ENCODE measurements at regions of chr3 and their contacts with region 1.

Region 1: DNA sequence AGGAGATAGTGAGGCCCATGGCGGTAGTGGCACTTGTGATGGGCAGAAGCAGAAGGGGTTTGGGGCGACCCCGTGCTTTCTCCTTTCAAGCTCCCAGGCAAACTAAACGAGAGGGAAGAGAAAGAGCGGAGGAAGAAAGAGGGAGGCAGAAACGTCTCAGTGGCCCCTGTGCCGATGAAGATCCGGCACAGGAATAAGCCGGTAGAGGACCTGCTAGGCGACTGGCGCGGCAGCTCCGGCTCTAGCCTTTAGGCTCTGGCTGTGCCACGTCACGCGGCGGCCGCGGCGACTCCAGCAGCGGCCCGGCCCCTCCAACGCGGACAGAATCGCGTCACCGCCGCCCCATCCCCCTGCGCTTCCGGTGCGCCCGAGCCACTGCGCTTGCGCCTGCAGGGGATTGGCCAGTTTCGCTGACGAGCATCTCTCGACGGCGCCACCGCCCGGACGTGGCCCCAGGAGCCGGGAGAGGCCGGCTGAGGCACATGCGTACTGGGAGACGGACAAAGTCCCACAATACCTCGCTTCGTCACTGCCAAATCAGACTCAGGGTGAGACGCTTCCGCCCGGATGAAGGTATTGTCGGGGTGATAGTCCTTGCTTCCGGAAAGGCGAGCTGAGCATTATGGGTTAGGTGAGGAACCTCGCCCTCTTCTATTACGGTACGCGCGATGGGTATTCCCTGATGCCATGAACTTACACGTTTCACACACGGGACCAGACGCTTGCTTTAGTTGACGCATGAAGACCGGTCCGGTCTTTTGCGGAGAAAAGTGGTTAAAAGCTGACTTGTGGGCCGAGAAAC is at the start of gene ARF4:
- DNase-seq: peak; percentile 100
- ATAC-seq: peak; percentile 89
- H3K4me3 Mint-ChIP-seq: peak within 1 kb of the TSS; percentile 95
- H3K27ac Mint-ChIP-seq: peak within 1 kb of the TSS; percentile 100
- H3K4me1 Mint-ChIP-seq: peaks cover 53% of the 10 kb centered on the region
- H3K27me3 Mint-ChIP-seq: no peaks in the 10 kb centered on the region
- CTCF ChIP-seq: no peak
- total RNA-seq, gene ARF4: 43.0 and 45.1 TPM in 2 replicates

Region 2: DNA sequence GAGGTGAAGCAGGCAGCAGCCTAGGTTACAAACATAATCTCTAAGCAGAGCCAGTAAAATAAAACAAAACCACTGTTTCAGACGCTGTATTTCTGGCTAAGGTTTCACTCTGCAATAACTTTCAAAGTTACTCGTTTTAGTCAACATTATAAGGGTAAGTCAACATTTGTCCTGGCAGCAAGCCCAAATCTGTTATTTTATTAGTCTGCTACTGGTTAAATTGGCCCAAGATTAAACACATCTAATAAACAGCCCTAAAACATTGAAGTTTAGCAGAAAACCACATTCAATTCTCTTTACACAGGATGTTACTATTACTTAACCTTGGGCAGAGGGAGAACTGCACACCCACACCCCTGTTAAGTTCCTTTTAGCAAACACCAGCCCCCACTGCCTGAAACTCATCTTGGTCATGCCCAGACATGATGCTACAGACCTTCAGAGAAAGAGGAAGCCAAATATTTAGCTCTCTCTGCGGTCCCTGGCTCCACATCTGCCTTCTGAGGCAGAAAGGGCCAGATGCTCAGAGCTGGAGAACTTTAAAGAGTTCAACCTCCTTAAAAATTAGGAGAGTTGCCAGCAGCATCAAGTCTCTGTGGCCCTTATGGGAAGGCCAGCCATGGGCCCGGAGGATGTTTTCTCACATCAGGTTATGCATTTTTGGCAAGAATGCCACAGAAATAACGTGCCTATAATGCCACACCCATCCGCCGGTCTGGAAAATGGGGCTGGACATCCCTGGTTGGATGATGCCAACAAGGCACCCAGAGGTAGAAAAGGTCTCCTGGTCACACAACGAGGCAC is 813.5 kb before region 1 on chr3:
- CTCF ChIA-PET with region 1: no interaction called
- POLR2A ChIA-PET with region 1: no interaction called
- intact Hi-C with region 1: loop called (anchors 5 kb)
- DNase-seq: peak; percentile 40
- ATAC-seq: peak; percentile 99
- H3K4me3 Mint-ChIP-seq: peak overlapping the region; percentile 32
- H3K27ac Mint-ChIP-seq: peak overlapping the region; percentile 92
- H3K4me1 Mint-ChIP-seq: peaks cover 88% of the 10 kb centered on the region
- H3K27me3 Mint-ChIP-seq: no peaks in the 10 kb centered on the region
- CTCF ChIP-seq: no peak

Region 3: DNA sequence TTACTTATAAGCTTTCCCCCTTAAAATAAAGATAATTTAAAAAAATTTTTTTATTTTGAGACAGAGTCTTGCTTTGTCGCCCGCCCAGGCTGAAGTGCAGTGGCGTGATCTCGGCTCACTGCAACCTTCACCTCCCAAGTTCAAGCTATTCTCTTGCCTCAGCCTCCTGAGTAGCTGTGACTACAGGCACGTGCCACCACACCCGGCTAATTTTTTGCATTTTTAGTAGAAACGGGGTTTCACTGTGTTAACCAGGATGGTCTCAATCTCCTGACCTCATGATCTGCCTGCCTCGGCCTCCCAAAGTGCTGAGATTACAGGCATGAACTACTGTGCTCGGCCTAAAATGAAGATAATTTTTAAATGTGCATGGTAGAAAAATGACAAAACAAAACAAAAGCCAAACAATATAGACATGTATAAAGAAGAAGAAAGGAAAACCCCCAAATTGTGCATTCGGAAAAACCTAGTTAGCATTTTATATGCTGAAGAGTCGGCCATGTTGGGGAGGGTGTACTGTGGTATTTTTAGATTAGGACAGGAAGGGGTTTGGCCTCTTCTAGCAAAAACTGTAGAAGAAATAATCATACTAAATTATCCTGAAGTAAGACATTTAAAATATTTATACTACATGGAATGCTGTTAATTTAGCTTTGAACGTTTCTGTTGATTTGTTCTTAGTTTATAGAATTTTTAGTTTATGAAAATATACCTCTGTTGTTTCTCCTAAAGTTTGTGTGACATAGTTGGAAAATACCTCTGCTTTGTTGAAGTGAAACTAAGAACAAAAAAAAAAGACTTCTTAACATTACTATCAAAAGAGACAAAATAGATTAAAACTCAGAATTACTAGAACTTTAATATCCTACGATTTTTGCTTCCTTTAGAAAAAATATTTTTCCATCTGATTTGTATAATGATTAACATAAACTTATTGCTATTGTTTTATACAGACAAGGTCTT is 362.4 kb before region 1 on chr3:
- CTCF ChIA-PET with region 1: no interaction called
- POLR2A ChIA-PET with region 1: interaction called, 3 read pairs
- intact Hi-C with region 1: loop called (anchors 2 kb)
- DNase-seq: no peak
- ATAC-seq: peak; percentile 80
- H3K4me3 Mint-ChIP-seq: peak overlapping the region; percentile 79
- H3K27ac Mint-ChIP-seq: peak overlapping the region; percentile 95
- H3K4me1 Mint-ChIP-seq: peaks cover 52% of the 10 kb centered on the region
- H3K27me3 Mint-ChIP-seq: no peaks in the 10 kb centered on the region
- CTCF ChIP-seq: no peak

Region 4: GRCh38 chr3:57572096-57572495 is 25.2 kb before region 1 on chr3:
- CTCF ChIA-PET with region 1: no interaction called
- POLR2A ChIA-PET with region 1: interaction called, 11 read pairs
- intact Hi-C with region 1: no loop called
- DNase-seq: no peak
- ATAC-seq: no peak
- H3K4me3 Mint-ChIP-seq: no peak overlapping the region
- H3K27ac Mint-ChIP-seq: no peak overlapping the region
- H3K4me1 Mint-ChIP-seq: peaks cover 1% of the 10 kb centered on the region
- H3K27me3 Mint-ChIP-seq: no peaks in the 10 kb centered on the region
- CTCF ChIP-seq: no peak

Region 5: GRCh38 chr3:57755668-57756527 is 158.6 kb after region 1 on chr3 and contains the start of gene SLMAP:
- CTCF ChIA-PET with region 1: interaction called, 5 read pairs
- POLR2A ChIA-PET with region 1: interaction called, 37 read pairs
- intact Hi-C with region 1: loop called (anchors 1 kb)
- DNase-seq: peak; percentile 87
- ATAC-seq: peak; percentile 94
- H3K4me3 Mint-ChIP-seq: peak within 1 kb of the TSS; percentile 95
- H3K27ac Mint-ChIP-seq: peak within 1 kb of the TSS; percentile 94
- H3K4me1 Mint-ChIP-seq: peaks cover 39% of the 10 kb centered on the region
- H3K27me3 Mint-ChIP-seq: no peaks in the 10 kb centered on the region
- CTCF ChIP-seq: no peak
- total RNA-seq, gene SLMAP: 45.4 and 57.1 TPM in 2 replicates